HEK293T (cell line): ENCODE measurements at regions of chr18 and their contacts with region 1.

Region 1: GRCh38 chr18:35005963-35006577 is 35.1 kb upstream of the MAPRE2 start:
- DNase-seq: peak; percentile 80

Region 2: GRCh38 chr18:35127201-35127600 is 121.1 kb after region 1 on chr18:
- CTCF ChIA-PET with region 1: interaction called, 11 read pairs
- POLR2A ChIA-PET with region 1: no interaction called
- DNase-seq: peak; percentile 53

Region 3: GRCh38 chr18:35143622-35144596 is 137.8 kb after region 1 on chr18:
- CTCF ChIA-PET with region 1: interaction called, 49 read pairs
- POLR2A ChIA-PET with region 1: interaction called, 4 read pairs
- DNase-seq: peak; percentile 87